Activated CD8-positive, alpha-beta T cell treated with anti-CD3 and anti-CD28 coated beads, Interleukin-2, amount 10 ng/mL, durations not matched to agents 7 days and 5 days (primary cell): ENCODE measurements at regions of chr17 and their contacts with region 1.

Region 1: GRCh38 chr17:3827124-3827773 is 18.8 kb downstream of the NCBP3 start:
- DNase-seq: peak; percentile 83
- ATAC-seq: no peak
- H3K4me3 Mint-ChIP-seq: no peak overlapping the region
- H3K27ac Mint-ChIP-seq: no peak overlapping the region
- H3K4me1 Mint-ChIP-seq: peaks cover 9% of the 10 kb centered on the region
- H3K27me3 Mint-ChIP-seq: no peaks in the 10 kb centered on the region

Region 2: GRCh38 chr17:3723556-3724369 is 103.5 kb before region 1 on chr17 and contains the start of gene HASPIN:
- CTCF ChIA-PET with region 1: interaction called, 11 read pairs
- POLR2A ChIA-PET with region 1: interaction called, 3 read pairs
- DNase-seq: peak; percentile 94
- ATAC-seq: peak; percentile 94
- H3K4me3 Mint-ChIP-seq: peak within 1 kb of the TSS; percentile 92
- H3K27ac Mint-ChIP-seq: peak within 1 kb of the TSS; percentile 90
- H3K4me1 Mint-ChIP-seq: peaks cover 63% of the 10 kb centered on the region
- H3K27me3 Mint-ChIP-seq: no peaks in the 10 kb centered on the region
- total RNA-seq, gene HASPIN: 27.0 to 28.1 TPM

Region 3: DNA sequence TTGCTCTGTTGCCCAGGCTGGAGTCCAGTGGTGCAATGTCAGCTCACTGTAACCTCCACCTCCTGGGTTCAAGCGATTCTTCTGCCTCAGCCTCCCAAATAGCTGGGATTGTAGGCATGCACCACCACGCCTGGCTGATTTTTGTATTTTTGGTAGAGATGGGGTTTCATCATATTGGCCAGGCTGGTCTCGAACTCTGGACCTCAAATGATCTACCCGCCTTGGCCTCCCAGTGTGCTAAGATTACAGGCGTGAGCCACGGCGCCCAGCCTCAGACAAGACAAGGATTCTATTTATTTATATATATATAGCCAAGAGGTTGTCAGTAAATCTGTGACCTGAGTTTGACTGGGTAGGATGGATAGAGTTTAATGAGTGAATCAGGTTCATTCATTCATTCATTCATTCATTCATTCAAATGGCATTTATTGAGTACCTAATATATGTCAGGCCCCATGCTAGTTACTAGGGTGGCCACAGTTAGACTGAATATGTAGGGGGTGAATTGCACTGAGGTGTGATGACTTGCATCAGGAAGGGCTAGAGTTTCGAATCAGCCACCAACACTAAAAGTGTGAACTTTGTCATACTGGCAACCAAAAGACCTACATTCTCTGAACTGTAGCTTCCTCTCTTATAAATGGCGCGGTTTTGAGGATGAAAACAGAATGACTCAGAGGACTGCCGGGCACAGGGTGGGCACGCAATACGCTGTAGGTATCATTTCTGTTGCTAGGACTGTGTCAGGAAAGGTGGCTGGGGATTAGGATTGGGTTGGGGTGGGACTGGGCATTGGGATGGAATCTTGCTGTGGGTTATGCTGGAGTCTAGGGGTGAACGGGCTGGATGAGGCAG is 64.1 kb before region 1 on chr17:
- CTCF ChIA-PET with region 1: interaction called, 11 read pairs
- POLR2A ChIA-PET with region 1: no interaction called
- DNase-seq: peak; percentile 69
- ATAC-seq: peak; percentile 50
- H3K4me3 Mint-ChIP-seq: peak overlapping the region; percentile 59
- H3K27ac Mint-ChIP-seq: peak overlapping the region; percentile 90
- H3K4me1 Mint-ChIP-seq: peaks cover 59% of the 10 kb centered on the region
- H3K27me3 Mint-ChIP-seq: peaks cover 2% of the 10 kb centered on the region

Region 4: GRCh38 chr17:3804503-3804931 is 22.7 kb before region 1 on chr17:
- CTCF ChIA-PET with region 1: interaction called, 14 read pairs
- POLR2A ChIA-PET with region 1: no interaction called
- DNase-seq: no peak
- ATAC-seq: peak; percentile 62
- H3K4me3 Mint-ChIP-seq: no peak overlapping the region
- H3K27ac Mint-ChIP-seq: no peak overlapping the region
- H3K4me1 Mint-ChIP-seq: peaks cover 49% of the 10 kb centered on the region
- H3K27me3 Mint-ChIP-seq: no peaks in the 10 kb centered on the region

Region 5: GRCh38 chr17:3845621-3846441 is 18.6 kb after region 1 on chr17 and contains the start of gene NCBP3:
- CTCF ChIA-PET with region 1: interaction called, 78 read pairs
- POLR2A ChIA-PET with region 1: no interaction called
- DNase-seq: peak; percentile 90
- ATAC-seq: peak; percentile 97
- H3K4me3 Mint-ChIP-seq: peak within 1 kb of the TSS; percentile 94
- H3K27ac Mint-ChIP-seq: peak within 1 kb of the TSS; percentile 93
- H3K4me1 Mint-ChIP-seq: peaks cover 30% of the 10 kb centered on the region
- H3K27me3 Mint-ChIP-seq: peaks cover 5% of the 10 kb centered on the region
- total RNA-seq, gene NCBP3: 39.1 to 42.6 TPM

Region 6: DNA sequence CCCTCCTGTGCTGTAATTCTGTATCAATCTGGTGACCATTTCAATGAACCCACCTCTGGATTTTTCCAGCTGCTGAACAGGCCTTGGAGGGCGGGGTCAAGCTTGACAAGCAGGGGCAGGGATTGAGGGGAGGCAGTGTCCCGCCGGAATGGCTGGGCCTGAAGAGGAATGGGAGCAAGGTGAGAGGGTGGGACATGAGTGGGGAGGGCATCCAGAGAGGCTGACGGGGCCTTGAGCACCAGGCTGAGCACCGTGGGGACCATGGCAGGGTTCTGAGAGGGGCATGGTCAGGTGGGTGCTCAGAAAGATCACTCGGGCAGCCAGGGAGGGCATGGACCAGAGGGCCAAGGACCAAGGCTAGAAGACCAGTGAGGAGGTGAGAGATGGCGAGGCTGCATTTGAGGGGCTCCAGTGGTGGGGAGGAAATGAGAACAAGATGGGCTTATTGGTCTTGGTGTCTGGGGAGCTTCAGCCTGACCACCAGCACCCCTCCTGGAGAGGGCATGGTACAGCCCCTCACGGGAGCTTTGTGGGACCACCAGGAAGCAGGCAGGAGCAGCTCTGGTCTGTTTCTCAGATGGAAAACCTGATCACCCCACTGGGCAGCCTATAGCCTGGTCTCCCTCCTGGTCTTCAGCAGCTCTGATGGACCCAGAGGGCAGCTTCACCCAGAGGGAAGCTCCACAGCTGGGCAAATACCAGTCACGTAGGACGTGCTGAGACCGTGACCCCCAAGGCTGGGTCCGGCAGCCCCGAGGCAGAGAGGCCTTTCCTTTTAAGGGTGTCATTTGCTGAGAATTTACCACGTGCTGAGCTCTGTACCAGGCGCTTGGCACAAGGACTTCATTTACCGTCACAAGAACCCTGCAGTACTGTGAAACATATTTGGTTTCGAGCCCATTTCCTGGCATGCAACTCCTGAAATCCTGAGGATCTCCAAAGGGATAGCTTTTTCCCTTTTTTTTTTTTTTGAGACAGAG is 30.2 kb after region 1 on chr17:
- CTCF ChIA-PET with region 1: no interaction called
- POLR2A ChIA-PET with region 1: no interaction called
- DNase-seq: no peak
- ATAC-seq: no peak
- H3K4me3 Mint-ChIP-seq: no peak overlapping the region
- H3K27ac Mint-ChIP-seq: no peak overlapping the region
- H3K4me1 Mint-ChIP-seq: no peaks in the 10 kb centered on the region
- H3K27me3 Mint-ChIP-seq: no peaks in the 10 kb centered on the region